Calu3 (cell line): ENCODE measurements at regions of chr5 and their contacts with region 1.

Region 1: DNA sequence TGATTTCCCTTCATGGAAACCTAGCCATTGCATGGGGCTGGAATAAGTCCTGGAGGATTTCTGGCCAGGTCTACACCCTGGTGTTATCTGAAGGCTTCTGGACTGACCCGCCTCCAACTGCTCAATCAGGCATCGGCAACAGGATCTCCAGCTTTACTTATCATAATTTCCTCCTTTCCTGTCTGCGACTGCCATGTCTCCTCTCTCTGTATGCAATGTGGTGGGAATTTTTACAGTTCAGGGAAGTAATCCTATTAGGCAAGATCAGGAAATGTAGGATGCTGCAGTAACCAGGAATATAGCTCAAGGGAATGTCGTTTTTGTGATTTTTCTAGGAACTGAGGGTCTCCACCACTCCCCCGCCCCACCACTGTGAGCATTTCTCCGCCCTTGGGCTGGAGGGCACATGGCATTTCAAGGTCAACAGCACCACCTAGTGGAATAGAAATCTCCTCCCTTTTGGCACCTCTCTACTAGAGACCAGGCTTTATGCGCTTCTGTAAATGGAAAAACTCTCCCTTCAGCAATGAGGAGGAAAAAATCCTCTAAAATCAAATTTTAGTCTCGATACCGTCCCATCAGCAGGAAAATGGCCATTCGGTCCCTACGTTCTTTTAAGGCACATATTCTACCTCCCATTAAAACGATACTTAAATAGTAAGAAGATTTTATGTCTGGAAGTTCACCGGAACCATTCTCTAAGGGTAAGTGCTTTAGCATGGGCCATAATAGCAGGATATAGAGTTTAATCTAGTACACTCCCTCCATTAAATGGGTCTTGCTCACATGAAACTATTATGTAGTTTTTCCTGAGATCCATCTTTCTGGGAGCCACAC is 93.0 kb downstream of the YTHDC2 start:
- DNase-seq: peak; percentile 68
- H3K4me3 Mint-ChIP-seq: peak overlapping the region; percentile 17
- H3K27ac Mint-ChIP-seq: no peak overlapping the region
- H3K4me1 Mint-ChIP-seq: no peaks in the 10 kb centered on the region
- H3K27me3 Mint-ChIP-seq: no peaks in the 10 kb centered on the region
- CTCF ChIP-seq: peak; percentile 84

Region 2: GRCh38 chr5:112551419-112552032 is 1055.0 kb before region 1 on chr5:
- CTCF ChIA-PET with region 1: no interaction called
- intact Hi-C with region 1: loop called (anchors 5 kb)
- DNase-seq: peak; percentile 64
- H3K4me3 Mint-ChIP-seq: no peak overlapping the region
- H3K27ac Mint-ChIP-seq: no peak overlapping the region
- H3K4me1 Mint-ChIP-seq: peaks cover 23% of the 10 kb centered on the region
- H3K27me3 Mint-ChIP-seq: no peaks in the 10 kb centered on the region
- CTCF ChIP-seq: peak; percentile 61

Region 3: GRCh38 chr5:112995764-112996618 is 610.5 kb before region 1 on chr5:
- CTCF ChIA-PET with region 1: interaction called, 4 read pairs
- intact Hi-C with region 1: loop called (anchors 1 kb)
- DNase-seq: peak; percentile 79
- H3K4me3 Mint-ChIP-seq: no peak overlapping the region
- H3K27ac Mint-ChIP-seq: no peak overlapping the region
- H3K4me1 Mint-ChIP-seq: no peaks in the 10 kb centered on the region
- H3K27me3 Mint-ChIP-seq: no peaks in the 10 kb centered on the region
- CTCF ChIP-seq: peak; percentile 79

Region 4: GRCh38 chr5:113336975-113337374 is 269.5 kb before region 1 on chr5:
- CTCF ChIA-PET with region 1: interaction called, 10 read pairs
- intact Hi-C with region 1: loop called (anchors 1 kb)
- DNase-seq: peak; percentile 54
- H3K4me3 Mint-ChIP-seq: no peak overlapping the region
- H3K27ac Mint-ChIP-seq: no peak overlapping the region
- H3K4me1 Mint-ChIP-seq: no peaks in the 10 kb centered on the region
- H3K27me3 Mint-ChIP-seq: no peaks in the 10 kb centered on the region
- CTCF ChIP-seq: peak; percentile 66

Region 5: GRCh38 chr5:113378959-113379541 is 227.5 kb before region 1 on chr5:
- CTCF ChIA-PET with region 1: interaction called, 3 read pairs
- intact Hi-C with region 1: loop called (anchors 1 kb)
- DNase-seq: peak; percentile 69
- H3K4me3 Mint-ChIP-seq: no peak overlapping the region
- H3K27ac Mint-ChIP-seq: no peak overlapping the region
- H3K4me1 Mint-ChIP-seq: no peaks in the 10 kb centered on the region
- H3K27me3 Mint-ChIP-seq: no peaks in the 10 kb centered on the region
- CTCF ChIP-seq: peak; percentile 73

Region 6: GRCh38 chr5:113513384-113514288 is 92.9 kb before region 1 on chr5 and contains the start of gene YTHDC2:
- CTCF ChIA-PET with region 1: no interaction called
- intact Hi-C with region 1: loop called (anchors 2 kb)
- DNase-seq: peak; percentile 91
- H3K4me3 Mint-ChIP-seq: peak within 1 kb of the TSS; percentile 74
- H3K27ac Mint-ChIP-seq: peak within 1 kb of the TSS; percentile 68
- H3K4me1 Mint-ChIP-seq: peaks cover 24% of the 10 kb centered on the region
- H3K27me3 Mint-ChIP-seq: peaks cover 18% of the 10 kb centered on the region
- CTCF ChIP-seq: no peak
- total RNA-seq, gene YTHDC2: 31.1 and 31.8 TPM in 2 replicates

Region 7: DNA sequence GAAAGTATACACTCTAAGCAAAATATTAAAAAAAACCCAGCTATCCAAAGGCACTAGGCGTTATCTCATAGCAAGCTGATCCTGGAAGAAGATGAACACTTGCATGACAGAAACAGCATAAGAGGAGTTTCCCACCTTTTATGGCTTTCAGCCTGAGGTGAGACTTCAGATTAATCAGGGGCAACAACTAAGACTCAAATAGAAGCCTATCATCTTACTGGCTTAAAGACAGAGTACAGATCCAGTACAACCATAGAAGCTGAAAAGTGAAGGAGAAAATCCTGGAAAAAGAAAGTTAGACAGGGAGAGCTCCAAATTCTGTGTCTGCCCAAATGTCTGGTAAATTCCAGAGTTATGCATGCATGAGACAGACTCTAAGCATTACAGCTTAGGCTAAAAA is 394.6 kb after region 1 on chr5:
- CTCF ChIA-PET with region 1: no interaction called
- intact Hi-C with region 1: no loop called
- DNase-seq: no peak
- H3K4me3 Mint-ChIP-seq: no peak overlapping the region
- H3K27ac Mint-ChIP-seq: no peak overlapping the region
- H3K4me1 Mint-ChIP-seq: no peaks in the 10 kb centered on the region
- H3K27me3 Mint-ChIP-seq: no peaks in the 10 kb centered on the region
- CTCF ChIP-seq: no peak

Region 8: GRCh38 chr5:115069087-115069968 is 1462.8 kb after region 1 on chr5:
- CTCF ChIA-PET with region 1: interaction called, 9 read pairs
- intact Hi-C with region 1: loop called (anchors 5 kb)
- DNase-seq: peak; percentile 51
- H3K4me3 Mint-ChIP-seq: no peak overlapping the region
- H3K27ac Mint-ChIP-seq: no peak overlapping the region
- H3K4me1 Mint-ChIP-seq: peaks cover 7% of the 10 kb centered on the region
- H3K27me3 Mint-ChIP-seq: no peaks in the 10 kb centered on the region
- CTCF ChIP-seq: no peak